ENCODE measurements at regions of chr2 and their contacts with region 1.

Region 1: GRCh38 chr2:197113275-197113711 is 186.8 kb upstream of the PGAP1 start:
- DNase-seq: peak; percentile 48
- CTCF ChIP-seq: peak; percentile 61

Region 2: DNA sequence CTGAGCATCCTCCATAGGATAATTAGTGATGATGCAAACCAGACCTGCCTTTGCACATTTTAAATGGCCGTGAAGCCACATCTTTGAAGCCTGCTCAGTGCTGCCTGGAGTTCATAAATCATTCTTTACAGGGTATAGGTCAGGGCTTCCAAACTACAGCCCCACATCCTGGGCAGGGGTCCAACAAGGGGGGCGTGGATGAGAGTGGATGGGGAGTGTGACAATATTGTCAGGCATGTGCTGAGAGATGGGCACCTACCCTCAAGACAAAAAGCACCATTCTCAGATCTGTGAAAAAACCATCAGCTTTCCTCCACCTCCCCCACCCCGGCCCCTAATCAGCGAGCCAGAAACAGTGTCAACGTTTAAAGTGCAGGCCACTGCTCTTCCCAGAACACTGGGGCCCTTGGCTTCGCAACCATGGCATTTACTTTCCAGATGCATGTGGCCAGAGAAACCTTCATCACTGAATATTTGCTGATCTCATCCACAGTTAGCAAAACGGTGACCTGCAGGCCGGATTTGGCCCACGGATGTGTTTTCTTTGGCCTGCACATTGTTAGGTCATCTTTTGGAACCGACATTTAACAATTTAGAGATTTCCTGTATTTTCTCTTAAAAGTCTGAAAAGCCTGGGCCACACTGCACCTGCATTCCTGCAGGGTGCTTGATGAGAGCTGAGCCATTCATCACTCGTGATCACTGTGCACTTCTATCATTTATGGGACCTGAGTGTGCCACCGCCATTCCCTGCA is 66.6 kb after region 1 on chr2:
- in situ Hi-C with region 1: loop called (anchors 10 kb)
- DNase-seq: no peak
- CTCF ChIP-seq: no peak